ENCODE measurements at regions of chr17 and their contacts with region 1.

Region 1: GRCh38 chr17:45135192-45135977 is at the start of gene ACBD4:
- DNase-seq: peak; percentile 79
- H3K4me3 ChIP-seq: peak within 1 kb of the TSS; percentile 83
- H3K27me3 ChIP-seq: no peaks in the 10 kb centered on the region
- CTCF ChIP-seq: peak; percentile 100
- polyA plus RNA-seq, gene ACBD4: 5.4 and 7.3 TPM in 2 replicates

Region 2: DNA sequence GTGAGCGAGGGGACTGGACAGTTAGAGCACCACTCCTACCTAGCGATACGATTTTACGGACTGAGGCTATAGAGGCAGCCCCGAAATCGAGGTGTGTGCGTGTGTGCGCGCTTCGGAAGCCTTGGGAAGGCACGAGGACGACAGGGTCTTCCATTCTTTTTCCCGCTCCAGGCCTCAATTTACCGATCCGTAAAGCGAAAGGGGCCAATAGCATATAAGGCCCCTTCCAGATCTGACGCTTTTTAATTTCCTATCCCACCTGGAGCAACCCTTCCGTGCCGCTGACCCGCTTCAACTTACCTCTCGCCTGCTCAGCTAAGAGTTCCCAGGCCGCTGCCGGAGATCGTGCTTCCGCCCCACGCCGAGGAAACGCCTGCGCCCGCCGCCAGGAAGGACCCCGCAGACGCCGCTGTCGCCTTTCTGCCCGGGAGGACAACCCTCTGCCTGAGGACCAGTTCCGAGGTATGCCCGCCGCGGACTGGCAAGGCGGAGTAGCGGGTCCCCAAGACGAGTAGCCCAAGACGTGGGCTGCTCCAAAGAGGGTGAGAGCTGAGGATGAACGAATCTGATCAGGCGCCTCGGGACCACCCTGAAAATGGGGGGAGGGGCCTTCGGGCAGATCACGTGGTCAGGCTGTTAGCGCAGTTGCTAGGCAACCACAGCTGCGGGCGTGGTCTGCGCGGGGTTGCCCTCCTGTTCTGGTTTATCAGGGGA is 236.2 kb before region 1 on chr17 and contains the start of gene EFTUD2:
- CTCF ChIA-PET with region 1: interaction called, 12 read pairs
- POLR2A ChIA-PET with region 1: no interaction called
- DNase-seq: no peak
- H3K4me3 ChIP-seq: peak within 1 kb of the TSS; percentile 84
- H3K27me3 ChIP-seq: no peaks in the 10 kb centered on the region
- CTCF ChIP-seq: no peak
- polyA plus RNA-seq, gene EFTUD2: 72.0 and 121 TPM in 2 replicates

Region 3: GRCh38 chr17:45098869-45099616 is 36.3 kb before region 1 on chr17:
- CTCF ChIA-PET with region 1: interaction called, 95 read pairs
- POLR2A ChIA-PET with region 1: no interaction called
- DNase-seq: no peak
- H3K4me3 ChIP-seq: no peak overlapping the region
- H3K27me3 ChIP-seq: no peaks in the 10 kb centered on the region
- CTCF ChIP-seq: peak; percentile 91

Region 4: GRCh38 chr17:45148183-45149036 is 13.0 kb after region 1 on chr17 and contains the start of gene HEXIM1:
- CTCF ChIA-PET with region 1: interaction called, 131 read pairs
- POLR2A ChIA-PET with region 1: interaction called, 10 read pairs
- DNase-seq: peak; percentile 96
- H3K4me3 ChIP-seq: peak within 1 kb of the TSS; percentile 91
- H3K27me3 ChIP-seq: no peaks in the 10 kb centered on the region
- CTCF ChIP-seq: no peak
- polyA plus RNA-seq, gene HEXIM1: 16.0 and 16.7 TPM in 2 replicates

Region 5: DNA sequence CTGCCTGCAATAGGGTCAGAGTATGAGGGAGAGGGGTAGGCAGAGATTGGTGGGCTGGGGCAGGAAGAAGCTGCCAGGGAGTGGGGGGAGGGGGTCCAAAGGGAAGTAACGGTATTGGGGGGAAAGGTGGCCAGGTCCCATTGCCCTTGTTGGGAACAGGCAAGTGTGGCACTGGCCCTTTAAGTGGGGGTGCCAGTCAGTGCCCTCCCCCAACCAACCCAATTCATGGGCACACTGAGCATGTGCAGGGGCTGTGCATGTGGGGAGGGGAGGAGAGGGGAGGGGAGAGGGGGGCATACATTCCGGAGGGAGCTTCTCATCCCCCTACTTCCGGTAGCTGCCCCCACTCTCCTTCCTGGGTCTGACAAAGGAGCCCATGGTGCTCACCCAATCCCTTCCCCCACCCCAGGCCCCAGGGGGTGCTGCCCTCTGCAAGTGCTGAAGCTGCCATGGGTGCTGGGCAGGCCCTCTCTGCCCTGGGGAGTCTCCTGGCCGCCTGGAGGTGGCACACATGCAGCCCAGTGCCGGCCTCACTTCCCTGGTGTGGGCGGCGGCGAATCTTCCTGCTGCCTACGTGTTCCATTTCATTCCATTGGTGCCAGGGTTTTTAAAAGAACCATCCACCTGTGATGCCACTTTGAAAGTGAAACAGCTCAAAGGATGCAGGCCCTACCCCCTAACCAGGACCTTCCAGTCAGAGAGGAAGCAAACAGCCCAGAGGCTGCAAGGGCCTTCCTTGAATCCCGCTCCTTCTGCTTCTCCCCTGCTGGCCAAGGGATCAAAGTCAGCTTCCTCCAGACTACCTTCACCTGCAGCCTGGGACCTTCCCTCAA is 37.3 kb after region 1 on chr17:
- CTCF ChIA-PET with region 1: interaction called, 25 read pairs
- POLR2A ChIA-PET with region 1: no interaction called
- DNase-seq: peak; percentile 26
- H3K4me3 ChIP-seq: peak overlapping the region; percentile 24
- H3K27me3 ChIP-seq: no peaks in the 10 kb centered on the region
- CTCF ChIP-seq: peak; percentile 11; the same call in 1 of the 2 replicates

Region 6: DNA sequence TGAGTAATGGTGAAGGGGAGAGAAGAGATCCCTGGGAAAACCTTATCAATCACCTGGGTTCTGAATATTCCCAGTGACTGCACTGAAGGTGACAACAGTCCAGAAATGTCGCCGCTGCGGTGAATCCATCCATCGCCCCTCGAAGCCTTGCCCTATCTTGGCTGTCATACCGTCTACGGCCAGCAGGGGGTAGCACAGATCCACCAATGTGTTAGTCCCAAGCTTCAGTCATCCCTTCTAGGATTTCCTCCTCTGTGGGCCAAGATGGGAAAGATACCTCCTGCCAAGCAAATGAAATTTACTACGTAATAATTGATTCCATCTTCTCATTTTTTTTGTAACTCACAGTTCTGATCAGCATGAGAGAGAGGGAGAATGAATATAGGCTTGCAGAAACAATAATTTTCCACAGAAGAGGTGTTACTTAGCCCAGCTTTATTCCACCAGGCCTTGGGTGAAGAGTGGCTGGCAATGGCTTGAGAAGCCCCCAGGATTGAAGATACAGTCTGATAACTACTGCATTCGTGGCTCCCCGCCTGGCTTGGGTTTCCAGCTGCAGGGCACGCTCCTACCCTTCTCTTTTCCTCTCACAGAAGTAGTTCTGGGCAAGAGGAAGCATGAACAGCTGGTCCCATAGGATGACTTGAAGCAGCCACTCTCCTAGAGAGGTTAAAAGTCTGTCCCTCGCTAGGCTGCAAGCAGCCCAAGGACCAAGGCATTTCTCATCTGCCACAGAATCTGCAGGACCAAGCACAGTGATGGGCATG is 83.7 kb after region 1 on chr17:
- CTCF ChIA-PET with region 1: interaction called, 32 read pairs
- POLR2A ChIA-PET with region 1: no interaction called
- DNase-seq: no peak
- H3K4me3 ChIP-seq: no peak overlapping the region
- H3K27me3 ChIP-seq: peaks cover 5% of the 10 kb centered on the region; the same call in 1 of the 2 replicates
- CTCF ChIP-seq: peak; percentile 84

Region 7: GRCh38 chr17:45395569-45396415 is 260.4 kb after region 1 on chr17:
- CTCF ChIA-PET with region 1: no interaction called
- POLR2A ChIA-PET with region 1: no interaction called
- DNase-seq: no peak
- H3K4me3 ChIP-seq: peak overlapping the region; percentile 4; the same call in 1 of the 2 replicates
- H3K27me3 ChIP-seq: peaks cover 1% of the 10 kb centered on the region; the same call in 1 of the 2 replicates
- CTCF ChIP-seq: no peak